ENCODE measurements at regions of chr3 and their contacts with region 1.

Region 1: GRCh38 chr3:183188895-183189462 is 26.4 kb upstream of the LAMP3 start:
- DNase-seq: peak; percentile 30
- H3K4me3 Mint-ChIP-seq: no peak overlapping the region
- H3K27ac Mint-ChIP-seq: no peak overlapping the region
- H3K4me1 Mint-ChIP-seq: peaks cover 6% of the 10 kb centered on the region
- H3K27me3 Mint-ChIP-seq: no peaks in the 10 kb centered on the region
- CTCF ChIP-seq: no peak

Region 2: GRCh38 chr3:182937293-182938051 is 251.5 kb before region 1 on chr3:
- CTCF ChIA-PET with region 1: no interaction called
- POLR2A ChIA-PET with region 1: no interaction called
- intact Hi-C with region 1: no loop called
- DNase-seq: no peak
- H3K4me3 Mint-ChIP-seq: no peak overlapping the region
- H3K27ac Mint-ChIP-seq: no peak overlapping the region
- H3K4me1 Mint-ChIP-seq: no peaks in the 10 kb centered on the region
- H3K27me3 Mint-ChIP-seq: no peaks in the 10 kb centered on the region
- CTCF ChIP-seq: no peak

Region 3: GRCh38 chr3:183122257-183122932 is 66.6 kb before region 1 on chr3:
- CTCF ChIA-PET with region 1: interaction called, 69 read pairs
- POLR2A ChIA-PET with region 1: no interaction called
- intact Hi-C with region 1: loop called (anchors 1 kb)
- DNase-seq: peak; percentile 59
- H3K4me3 Mint-ChIP-seq: no peak overlapping the region
- H3K27ac Mint-ChIP-seq: no peak overlapping the region
- H3K4me1 Mint-ChIP-seq: no peaks in the 10 kb centered on the region
- H3K27me3 Mint-ChIP-seq: peaks cover 12% of the 10 kb centered on the region
- CTCF ChIP-seq: peak; percentile 57

Region 4: GRCh38 chr3:183259087-183259486 is 70.1 kb after region 1 on chr3:
- CTCF ChIA-PET with region 1: interaction called, 36 read pairs
- POLR2A ChIA-PET with region 1: interaction called, 31 read pairs
- intact Hi-C with region 1: no loop called
- DNase-seq: no peak
- H3K4me3 Mint-ChIP-seq: no peak overlapping the region
- H3K27ac Mint-ChIP-seq: peak overlapping the region; percentile 75
- H3K4me1 Mint-ChIP-seq: peaks cover 61% of the 10 kb centered on the region
- H3K27me3 Mint-ChIP-seq: no peaks in the 10 kb centered on the region
- CTCF ChIP-seq: no peak

Region 5: GRCh38 chr3:183291497-183292040 is 102.6 kb after region 1 on chr3:
- CTCF ChIA-PET with region 1: interaction called, 11 read pairs
- POLR2A ChIA-PET with region 1: interaction called, 5 read pairs
- intact Hi-C with region 1: loop called (anchors 10 kb)
- DNase-seq: peak; percentile 66
- H3K4me3 Mint-ChIP-seq: peak overlapping the region; percentile 0
- H3K27ac Mint-ChIP-seq: peak overlapping the region; percentile 86
- H3K4me1 Mint-ChIP-seq: peaks cover 45% of the 10 kb centered on the region
- H3K27me3 Mint-ChIP-seq: no peaks in the 10 kb centered on the region
- CTCF ChIP-seq: no peak

Region 6: DNA sequence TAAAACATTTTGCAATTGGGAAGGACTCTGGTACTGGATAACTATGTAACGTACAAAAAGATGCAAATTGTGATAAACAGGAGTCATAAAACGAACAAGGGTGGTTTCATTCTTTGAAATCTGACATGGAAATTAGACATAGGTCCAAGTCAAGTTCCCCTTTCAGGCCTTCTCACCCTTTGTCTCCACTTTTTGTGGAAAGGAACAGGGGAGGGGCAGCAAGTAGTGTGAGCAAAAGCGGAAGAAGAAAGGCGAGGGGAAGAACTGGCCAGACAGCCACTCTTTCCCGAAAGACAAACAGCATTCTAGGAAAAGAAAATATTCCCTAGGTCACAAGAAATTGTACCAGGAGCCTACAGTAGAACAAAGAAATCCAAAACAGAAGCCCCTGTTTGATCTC is 186.8 kb after region 1 on chr3:
- CTCF ChIA-PET with region 1: interaction called, 383 read pairs
- POLR2A ChIA-PET with region 1: interaction called, 86 read pairs
- intact Hi-C with region 1: no loop called
- DNase-seq: no peak
- H3K4me3 Mint-ChIP-seq: no peak overlapping the region
- H3K27ac Mint-ChIP-seq: no peak overlapping the region
- H3K4me1 Mint-ChIP-seq: peaks cover 29% of the 10 kb centered on the region
- H3K27me3 Mint-ChIP-seq: no peaks in the 10 kb centered on the region
- CTCF ChIP-seq: no peak

Region 7: DNA sequence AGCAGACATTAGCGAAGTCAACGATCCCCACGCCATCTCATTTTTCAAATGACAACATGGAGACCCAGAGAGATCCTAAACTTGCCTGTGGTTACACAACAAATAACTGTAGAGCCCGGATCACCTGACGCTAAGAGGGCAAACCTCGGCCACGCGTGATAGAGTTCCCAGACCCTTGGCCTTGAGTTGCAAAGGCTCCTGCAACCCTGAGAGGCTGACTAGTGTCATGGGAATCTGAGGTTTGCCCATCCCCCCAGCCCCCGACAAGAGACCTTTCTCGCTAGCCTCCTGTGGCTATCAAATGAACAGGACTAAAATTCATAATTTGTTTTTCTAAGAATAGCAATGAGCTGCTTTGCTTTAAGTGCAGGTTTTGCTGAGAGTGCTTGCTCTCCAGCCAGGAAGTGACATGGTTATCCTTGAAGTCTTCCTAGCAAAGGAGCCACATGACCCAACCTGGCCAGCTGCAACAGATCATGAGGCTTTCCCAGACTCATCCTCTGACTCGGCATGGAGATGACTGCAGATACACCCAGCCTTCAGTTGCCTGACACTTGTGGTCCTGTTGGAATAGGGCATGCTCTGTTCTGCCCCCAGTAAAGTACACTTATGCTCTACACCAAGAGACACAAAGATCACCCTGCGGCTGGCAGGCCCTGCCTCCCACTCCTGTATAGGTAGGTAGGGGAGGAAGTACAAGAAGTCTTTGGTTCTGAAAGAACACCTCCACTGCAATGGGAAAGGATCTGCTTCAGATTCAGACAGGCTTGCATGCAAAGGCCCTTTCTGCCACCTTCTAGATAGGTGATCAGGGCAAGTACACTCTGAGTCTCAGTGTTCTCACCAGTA is 203.4 kb after region 1 on chr3:
- CTCF ChIA-PET with region 1: interaction called, 27 read pairs
- POLR2A ChIA-PET with region 1: interaction called, 3 read pairs
- intact Hi-C with region 1: no loop called
- DNase-seq: no peak
- H3K4me3 Mint-ChIP-seq: no peak overlapping the region
- H3K27ac Mint-ChIP-seq: no peak overlapping the region
- H3K4me1 Mint-ChIP-seq: no peaks in the 10 kb centered on the region
- H3K27me3 Mint-ChIP-seq: no peaks in the 10 kb centered on the region
- CTCF ChIP-seq: no peak

Region 8: GRCh38 chr3:183502237-183503181 is 313.5 kb after region 1 on chr3:
- CTCF ChIA-PET with region 1: no interaction called
- POLR2A ChIA-PET with region 1: no interaction called
- intact Hi-C with region 1: no loop called
- DNase-seq: peak; percentile 27
- H3K4me3 Mint-ChIP-seq: no peak overlapping the region
- H3K27ac Mint-ChIP-seq: no peak overlapping the region
- H3K4me1 Mint-ChIP-seq: peaks cover 4% of the 10 kb centered on the region
- H3K27me3 Mint-ChIP-seq: no peaks in the 10 kb centered on the region
- CTCF ChIP-seq: peak; percentile 34

Region 9: GRCh38 chr3:183884427-183885296 is 695.7 kb after region 1 on chr3 and contains the start of gene PARL:
- CTCF ChIA-PET with region 1: no interaction called
- POLR2A ChIA-PET with region 1: interaction called, 3 read pairs
- intact Hi-C with region 1: loop called (anchors 10 kb)
- DNase-seq: peak; percentile 92
- H3K4me3 Mint-ChIP-seq: peak within 1 kb of the TSS; percentile 93
- H3K27ac Mint-ChIP-seq: peak within 1 kb of the TSS; percentile 88
- H3K4me1 Mint-ChIP-seq: peaks cover 13% of the 10 kb centered on the region
- H3K27me3 Mint-ChIP-seq: no peaks in the 10 kb centered on the region
- CTCF ChIP-seq: peak; percentile 91
- total RNA-seq, gene PARL: 73.5 and 88.0 TPM in 2 replicates

Measured in MCF 10A (cell line).